ENCODE measurements at regions of chr1 and their contacts with region 1.

Region 1: DNA sequence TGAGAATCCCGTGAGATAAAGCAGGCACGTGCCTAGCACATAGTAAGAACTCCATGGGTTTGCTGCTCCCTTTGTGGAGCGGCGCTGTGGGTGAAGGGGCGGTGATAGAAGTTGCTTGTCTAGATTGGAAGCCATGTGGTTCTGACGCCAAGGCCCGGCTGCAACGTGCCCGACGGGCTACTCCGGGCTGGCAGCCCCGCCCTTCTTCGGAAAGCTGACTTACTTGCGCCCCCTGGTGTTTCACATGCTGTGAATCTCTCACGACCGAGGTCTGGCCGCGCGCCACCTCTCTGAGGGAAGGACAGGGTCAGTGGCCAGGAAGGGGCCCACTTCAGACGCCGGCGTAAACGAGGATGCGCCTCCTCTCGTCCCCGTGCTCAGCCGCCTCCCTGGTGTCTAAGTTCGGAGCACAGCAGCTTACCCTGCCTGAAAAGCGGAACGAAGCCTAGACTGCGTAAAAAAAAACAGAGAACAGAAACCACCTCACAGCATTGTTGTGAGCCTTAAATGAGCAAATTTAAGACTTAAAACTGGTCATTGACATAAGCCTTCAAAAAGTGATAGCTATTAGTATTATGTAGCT is 42.6 kb upstream of the WNT2B start:
- DNase-seq: peak; percentile 89
- H3K4me3 Mint-ChIP-seq: peak overlapping the region; percentile 67
- H3K27ac Mint-ChIP-seq: peak overlapping the region; percentile 87
- H3K4me1 Mint-ChIP-seq: peaks cover 15% of the 10 kb centered on the region
- H3K27me3 Mint-ChIP-seq: no peaks in the 10 kb centered on the region
- CTCF ChIP-seq: peak; percentile 76

Region 2: DNA sequence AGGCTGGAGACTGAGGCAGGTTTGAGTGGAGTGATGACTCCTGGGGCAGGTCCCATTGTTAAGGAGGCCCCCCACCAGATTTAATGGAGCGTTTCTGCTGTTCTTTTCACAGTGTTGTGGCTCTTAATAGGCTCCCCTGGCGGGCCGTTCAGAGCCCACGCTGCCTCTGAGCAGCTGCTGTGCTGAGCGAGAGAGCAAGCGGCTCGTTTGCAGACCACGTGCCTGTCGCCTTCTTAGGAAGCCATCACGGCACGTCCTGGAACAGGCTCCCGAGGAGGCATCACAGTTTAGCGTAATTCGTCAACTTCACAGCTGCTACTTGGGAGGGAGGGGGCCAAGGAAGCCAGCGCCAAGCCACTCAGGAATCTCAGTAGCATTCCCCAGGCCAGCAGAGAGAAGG is 140.7 kb before region 1 on chr1:
- CTCF ChIA-PET with region 1: no interaction called
- POLR2A ChIA-PET with region 1: no interaction called
- intact Hi-C with region 1: no loop called
- DNase-seq: no peak
- H3K4me3 Mint-ChIP-seq: no peak overlapping the region
- H3K27ac Mint-ChIP-seq: no peak overlapping the region
- H3K4me1 Mint-ChIP-seq: peaks cover 3% of the 10 kb centered on the region
- H3K27me3 Mint-ChIP-seq: no peaks in the 10 kb centered on the region
- CTCF ChIP-seq: no peak

Region 3: GRCh38 chr1:112383759-112384356 is 82.3 kb before region 1 on chr1:
- CTCF ChIA-PET with region 1: interaction called, 191 read pairs
- POLR2A ChIA-PET with region 1: no interaction called
- intact Hi-C with region 1: no loop called
- DNase-seq: no peak
- H3K4me3 Mint-ChIP-seq: no peak overlapping the region
- H3K27ac Mint-ChIP-seq: no peak overlapping the region
- H3K4me1 Mint-ChIP-seq: no peaks in the 10 kb centered on the region
- H3K27me3 Mint-ChIP-seq: peaks cover 51% of the 10 kb centered on the region
- CTCF ChIP-seq: no peak

Region 4: GRCh38 chr1:112395821-112396652 is 70.1 kb before region 1 on chr1 and contains the start of gene CTTNBP2NL:
- CTCF ChIA-PET with region 1: interaction called, 191 read pairs
- POLR2A ChIA-PET with region 1: interaction called, 25 read pairs
- intact Hi-C with region 1: loop called (anchors 1 kb)
- DNase-seq: peak; percentile 97
- H3K4me3 Mint-ChIP-seq: peak within 1 kb of the TSS; percentile 98
- H3K27ac Mint-ChIP-seq: peak within 1 kb of the TSS; percentile 98
- H3K4me1 Mint-ChIP-seq: peaks cover 53% of the 10 kb centered on the region
- H3K27me3 Mint-ChIP-seq: no peaks in the 10 kb centered on the region
- CTCF ChIP-seq: no peak
- total RNA-seq, gene CTTNBP2NL: 41.3 and 48.8 TPM in 2 replicates

Region 5: DNA sequence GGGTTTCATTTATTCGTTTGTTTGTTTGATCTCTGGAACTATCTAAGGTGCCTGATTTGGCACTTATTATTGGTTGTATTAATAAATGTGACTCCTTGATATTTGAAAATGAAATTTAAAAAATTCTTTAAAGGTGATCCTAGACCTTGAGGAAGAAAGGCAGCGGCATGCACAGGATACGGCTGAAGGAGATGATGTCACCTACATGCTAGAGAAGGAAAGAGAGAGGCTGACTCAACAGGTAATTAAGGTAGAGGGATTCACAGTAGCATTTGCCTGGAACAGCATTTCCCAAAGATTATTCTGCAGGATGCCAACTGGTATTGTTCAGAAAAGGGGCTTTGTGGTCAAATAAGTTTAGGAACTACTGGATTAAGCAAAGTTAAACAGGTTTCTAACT is 11.9 kb before region 1 on chr1:
- CTCF ChIA-PET with region 1: interaction called, 14 read pairs
- POLR2A ChIA-PET with region 1: no interaction called
- intact Hi-C with region 1: no loop called
- DNase-seq: no peak
- H3K4me3 Mint-ChIP-seq: no peak overlapping the region
- H3K27ac Mint-ChIP-seq: no peak overlapping the region
- H3K4me1 Mint-ChIP-seq: peaks cover 6% of the 10 kb centered on the region
- H3K27me3 Mint-ChIP-seq: no peaks in the 10 kb centered on the region
- CTCF ChIP-seq: no peak

Region 6: GRCh38 chr1:112614460-112615065 is 148.4 kb after region 1 on chr1:
- CTCF ChIA-PET with region 1: interaction called, 7 read pairs
- POLR2A ChIA-PET with region 1: interaction called, 3 read pairs
- intact Hi-C with region 1: loop called (anchors 1 kb)
- DNase-seq: peak; percentile 49
- H3K4me3 Mint-ChIP-seq: no peak overlapping the region
- H3K27ac Mint-ChIP-seq: no peak overlapping the region
- H3K4me1 Mint-ChIP-seq: peaks cover 6% of the 10 kb centered on the region
- H3K27me3 Mint-ChIP-seq: no peaks in the 10 kb centered on the region
- CTCF ChIP-seq: peak; percentile 55

Measured in MCF 10A (cell line).